Lower leg skin (tissue), 4 donors: ENCODE measurements at regions of chr14 and their contacts with region 1.

Region 1: DNA sequence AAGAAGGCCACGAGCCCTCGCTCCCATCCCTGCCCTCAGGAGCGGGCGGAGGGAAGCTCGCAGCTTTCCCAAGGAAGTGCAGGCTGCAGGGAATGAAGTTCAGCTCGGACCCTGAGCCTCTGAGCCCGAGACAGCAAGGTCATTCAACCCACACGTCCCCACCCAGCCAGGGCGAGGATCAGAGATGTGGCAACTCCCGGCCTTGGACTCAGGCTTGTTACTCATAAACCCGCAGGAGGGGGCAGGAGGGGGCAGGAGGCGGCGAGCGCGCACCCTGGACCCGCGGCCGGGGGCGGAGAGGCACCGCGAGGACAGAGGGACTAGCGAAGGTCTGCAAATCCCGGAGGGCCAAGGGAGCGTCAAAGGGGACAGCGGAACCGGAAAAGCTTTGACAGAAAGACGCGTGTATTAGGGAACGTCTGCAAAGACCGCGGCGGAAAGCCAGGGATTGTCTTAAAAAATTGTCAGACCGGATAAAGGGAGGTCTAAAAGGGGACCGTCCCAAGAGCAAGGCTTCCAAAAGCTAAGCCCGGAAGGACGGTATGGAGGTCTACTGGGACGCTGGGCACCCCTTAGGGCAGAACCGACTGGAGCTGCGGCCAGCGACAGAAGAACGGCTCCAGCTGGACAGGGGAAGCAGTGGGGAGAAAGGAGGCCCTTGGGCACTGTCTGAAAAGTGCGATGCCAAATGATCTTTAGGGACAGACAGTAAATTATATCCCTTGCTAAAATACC is 609 bp upstream of the DCAF11 start:
- DNase-seq: peak; percentile 87 to 97
- H3K4me3 ChIP-seq: peak overlapping the region; percentile 66
- CTCF ChIP-seq: peak in 1 of 3 donors; percentile 11
- POLR2A ChIP-seq: no peak

Region 2: GRCh38 chr14:23376482-23377197 is 737.3 kb before region 1 on chr14 and contains the start of gene CMTM5:
- intact Hi-C with region 1: no loop called
- DNase-seq: no peak
- H3K4me3 ChIP-seq: no peak within 1 kb of the TSS
- CTCF ChIP-seq: no peak
- POLR2A ChIP-seq: no peak
- total RNA-seq, gene CMTM5: 0.38 to 0.58 TPM in 2 of 4 donors, not detected in the others

Region 3: GRCh38 chr14:24141097-24141880 is 27.3 kb after region 1 on chr14 and contains the start of gene EMC9:
- intact Hi-C with region 1: loop called (anchors 2 kb)
- DNase-seq: peak; percentile 100
- H3K4me3 ChIP-seq: peak within 1 kb of the TSS; percentile 66
- CTCF ChIP-seq: peak in 1 of 3 donors; percentile 47
- POLR2A ChIP-seq: no peak
- total RNA-seq, gene EMC9: 13.3 to 21.8 (median 20.6) TPM